ENCODE measurements at regions of chr3 and their contacts with region 1.

Region 1: GRCh38 chr3:58324391-58325390 is 8.0 kb upstream of the PXK start:
- DNase-seq: no peak
- ATAC-seq: no peak
- H3K4me3 ChIP-seq: peak overlapping the region in 1 of 3 experiments; percentile 26; a peak in 1 of 6 replicates
- H3K27ac ChIP-seq: no peak overlapping the region
- H3K4me1 ChIP-seq: peaks cover 54% of the 10 kb centered on the region
- H3K27me3 ChIP-seq: no peaks in the 10 kb centered on the region
- CTCF ChIP-seq: no peak
- EP300 ChIP-seq: no peak
- POLR2A ChIP-seq: no peak
- RAD21 ChIP-seq: no peak

Region 2: DNA sequence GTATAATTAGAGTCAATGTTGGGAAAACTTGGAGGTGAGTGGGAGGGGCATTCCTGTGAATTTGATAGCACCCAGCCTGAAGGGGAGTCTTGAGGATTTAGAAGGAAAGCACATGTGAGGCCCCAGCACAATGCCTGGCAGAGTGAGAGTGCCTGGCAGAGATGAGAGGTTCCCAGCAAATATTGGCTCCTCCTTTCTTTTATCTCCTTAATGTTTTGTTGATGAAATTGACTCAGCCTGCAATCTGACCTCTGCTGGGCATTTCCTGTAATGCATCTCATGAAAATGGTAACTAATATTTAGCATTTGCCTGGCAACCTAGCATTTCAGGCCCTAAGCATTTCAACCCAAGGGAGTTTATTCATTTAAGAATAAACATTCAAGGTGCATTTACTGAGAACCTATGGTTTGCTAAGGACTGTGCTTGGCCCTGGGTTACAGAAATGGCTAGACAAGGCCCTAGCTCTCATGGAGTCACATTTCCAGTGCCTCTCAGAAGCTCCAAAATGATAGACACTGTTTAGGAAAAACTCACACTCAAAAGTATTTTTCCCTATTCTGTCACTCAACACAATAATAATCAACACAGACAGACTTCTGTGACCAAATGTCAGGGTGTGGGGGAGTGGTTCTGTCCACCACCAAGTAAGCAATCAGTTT is 90.0 kb after region 1 on chr3:
- CTCF ChIA-PET with region 1: interaction called, 25 read pairs
- POLR2A ChIA-PET with region 1: no interaction called
- in situ Hi-C with region 1: loop called (anchors 5 kb)
- intact Hi-C with region 1: loop called (anchors 1 kb)
- DNase-seq: peak; percentile 38
- ATAC-seq: peak; percentile 32; the same call in 1 of the 3 replicates
- H3K4me3 ChIP-seq: no peak overlapping the region
- H3K27ac ChIP-seq: no peak overlapping the region
- H3K4me1 ChIP-seq: peaks cover 22% of the 10 kb centered on the region
- H3K27me3 ChIP-seq: no peaks in the 10 kb centered on the region
- CTCF ChIP-seq: peak; percentile 68
- EP300 ChIP-seq: no peak
- POLR2A ChIP-seq: no peak
- RAD21 ChIP-seq: peak; percentile 60